A673 (cell line): ENCODE measurements at regions of chr13 and their contacts with region 1.

Region 1: GRCh38 chr13:97574926-97575325 is 141.0 kb downstream of the RAP2A start:
- DNase-seq: peak; percentile 83
- H3K4me3 ChIP-seq: no peak overlapping the region
- H3K27ac ChIP-seq: no peak overlapping the region
- H3K4me1 ChIP-seq: peaks cover 23% of the 10 kb centered on the region
- H3K27me3 ChIP-seq: no peaks in the 10 kb centered on the region
- CTCF ChIP-seq: peak; percentile 78

Region 2: GRCh38 chr13:97359181-97360057 is 215.5 kb before region 1 on chr13:
- CTCF ChIA-PET with region 1: no interaction called
- POLR2A ChIA-PET with region 1: no interaction called
- intact Hi-C with region 1: loop called (anchors 10 kb)
- DNase-seq: peak; percentile 83
- H3K4me3 ChIP-seq: no peak overlapping the region
- H3K27ac ChIP-seq: no peak overlapping the region
- H3K4me1 ChIP-seq: no peaks in the 10 kb centered on the region
- H3K27me3 ChIP-seq: no peaks in the 10 kb centered on the region
- CTCF ChIP-seq: peak; percentile 91

Region 3: GRCh38 chr13:97432917-97433726 is 141.8 kb before region 1 on chr13:
- CTCF ChIA-PET with region 1: no interaction called
- POLR2A ChIA-PET with region 1: no interaction called
- intact Hi-C with region 1: loop called (anchors 2 kb)
- DNase-seq: peak; percentile 99
- H3K4me3 ChIP-seq: peak overlapping the region; percentile 81
- H3K27ac ChIP-seq: peak overlapping the region; percentile 98
- H3K4me1 ChIP-seq: peaks cover 29% of the 10 kb centered on the region
- H3K27me3 ChIP-seq: no peaks in the 10 kb centered on the region
- CTCF ChIP-seq: no peak

Region 4: GRCh38 chr13:97438856-97439595 is 135.9 kb before region 1 on chr13:
- CTCF ChIA-PET with region 1: no interaction called
- POLR2A ChIA-PET with region 1: interaction called, 14 read pairs
- intact Hi-C with region 1: no loop called
- DNase-seq: peak; percentile 82
- H3K4me3 ChIP-seq: peak overlapping the region; percentile 8
- H3K27ac ChIP-seq: peak overlapping the region; percentile 78
- H3K4me1 ChIP-seq: peaks cover 69% of the 10 kb centered on the region
- H3K27me3 ChIP-seq: no peaks in the 10 kb centered on the region
- CTCF ChIP-seq: no peak